ENCODE measurements at regions of chr1 and their contacts with region 1.

Region 1: DNA sequence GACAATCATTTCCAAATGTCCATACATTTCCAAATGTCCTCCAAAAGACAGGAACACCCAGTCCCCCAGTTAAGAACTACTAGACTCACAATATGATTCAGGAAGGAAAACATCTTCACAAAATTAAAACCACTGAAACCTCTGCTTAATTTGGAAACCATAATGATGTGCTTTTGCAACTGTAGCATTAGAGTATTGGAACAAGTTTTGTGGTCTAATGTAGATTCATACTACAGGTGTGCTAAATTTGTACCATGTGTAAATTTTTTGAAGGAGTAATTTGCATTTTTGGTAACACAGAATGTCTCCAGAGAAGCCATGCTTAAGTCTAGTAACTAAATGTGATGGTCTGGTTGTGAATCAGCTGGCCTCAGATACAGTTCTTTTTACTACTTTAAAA is 129.6 kb downstream of the DPYD start:
- DNase-seq: no peak
- H3K4me3 Mint-ChIP-seq: peak overlapping the region; percentile 29
- H3K27ac Mint-ChIP-seq: peak overlapping the region; percentile 1
- H3K4me1 Mint-ChIP-seq: peaks cover 17% of the 10 kb centered on the region
- H3K27me3 Mint-ChIP-seq: no peaks in the 10 kb centered on the region

Region 2: DNA sequence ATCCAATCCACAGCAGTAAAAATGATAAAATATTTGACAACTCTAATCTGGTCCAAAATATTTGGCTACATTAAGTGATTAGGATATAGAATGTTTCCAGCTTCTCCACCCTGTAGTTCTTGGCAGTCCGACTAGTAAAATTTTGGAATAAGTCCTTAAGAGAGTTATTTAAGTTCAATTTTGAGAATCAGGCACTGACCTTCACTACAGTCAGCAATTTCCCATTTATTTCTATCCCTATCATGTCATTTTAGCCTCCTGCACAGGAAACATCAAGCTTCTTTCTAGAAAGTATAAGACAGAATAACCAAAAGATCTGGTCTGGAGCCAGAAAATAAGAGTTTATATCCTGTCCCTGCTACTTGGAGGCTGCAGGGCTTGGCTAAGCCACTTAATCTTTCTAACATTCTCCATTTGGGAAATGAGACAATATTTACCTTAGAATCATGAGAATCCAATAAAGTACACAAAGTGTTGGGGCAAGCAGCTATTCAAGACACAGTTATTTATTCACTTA is 32.7 kb before region 1 on chr1:
- intact Hi-C with region 1: no loop called
- DNase-seq: no peak
- H3K4me3 Mint-ChIP-seq: no peak overlapping the region
- H3K27ac Mint-ChIP-seq: no peak overlapping the region
- H3K4me1 Mint-ChIP-seq: no peaks in the 10 kb centered on the region
- H3K27me3 Mint-ChIP-seq: no peaks in the 10 kb centered on the region

Region 3: GRCh38 chr1:97943354-97943753 is 152.1 kb after region 1 on chr1:
- intact Hi-C with region 1: loop called (anchors 1 kb)
- DNase-seq: no peak
- H3K4me3 Mint-ChIP-seq: peak overlapping the region; percentile 70
- H3K27ac Mint-ChIP-seq: no peak overlapping the region
- H3K4me1 Mint-ChIP-seq: peaks cover 36% of the 10 kb centered on the region
- H3K27me3 Mint-ChIP-seq: peaks cover 12% of the 10 kb centered on the region

Region 4: GRCh38 chr1:98048244-98048643 is 257.0 kb after region 1 on chr1:
- intact Hi-C with region 1: loop called (anchors 10 kb)
- DNase-seq: peak; percentile 91
- H3K4me3 Mint-ChIP-seq: peak overlapping the region; percentile 13
- H3K27ac Mint-ChIP-seq: no peak overlapping the region
- H3K4me1 Mint-ChIP-seq: peaks cover 34% of the 10 kb centered on the region
- H3K27me3 Mint-ChIP-seq: peaks cover 87% of the 10 kb centered on the region

Measured in activated CD4-positive, alpha-beta T cell treated with anti-CD3 and anti-CD28 coated beads, Interleukin-2, amount 10 ng/mL, durations not matched to agents 24 days and 14 days (primary cell).